KBM-7 (cell line): ENCODE measurements at regions of chr9 and their contacts with region 1.

Region 1: DNA sequence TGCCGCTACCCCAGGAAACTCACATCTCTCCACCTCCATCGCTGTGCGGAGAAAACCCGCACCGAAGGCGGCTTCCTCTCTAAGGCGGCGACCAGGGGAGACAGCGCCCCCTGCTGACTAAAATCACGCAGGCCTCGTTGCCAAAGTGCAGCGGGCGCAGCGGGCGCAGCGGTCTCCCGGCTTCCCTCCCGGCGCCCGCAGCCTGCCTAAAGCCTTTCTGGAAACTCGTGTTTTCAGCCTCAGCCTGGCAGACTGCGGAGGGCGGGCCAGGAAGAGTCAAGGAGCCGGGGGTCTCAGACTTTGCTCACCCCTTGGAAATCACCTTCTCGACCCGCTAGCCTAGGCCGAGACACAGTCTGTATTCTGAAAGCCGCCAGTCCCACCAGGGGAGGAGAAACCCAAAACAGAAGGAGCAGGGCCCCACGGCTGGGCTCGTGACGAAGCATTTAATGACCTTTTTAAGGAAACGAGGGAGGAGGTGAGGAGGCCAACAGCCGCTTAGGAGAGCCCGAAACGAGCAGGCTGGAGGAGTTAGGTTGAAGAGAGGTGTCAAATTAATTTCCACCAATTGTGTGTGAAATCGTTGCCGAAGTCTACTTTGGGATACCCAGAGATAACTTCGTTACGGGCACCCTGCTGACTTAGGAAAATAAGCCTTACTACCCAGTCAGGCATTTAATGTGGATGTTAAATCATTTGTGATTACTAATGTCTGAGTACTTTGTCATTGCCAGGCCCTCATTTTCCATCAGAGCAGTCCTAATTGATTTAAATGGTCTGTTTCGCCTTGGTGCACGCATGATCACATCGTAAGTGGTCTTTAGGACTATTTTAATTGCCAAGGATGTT is 7.3 kb upstream of the FOXB2 start:
- DNase-seq: peak; percentile 85

Region 2: DNA sequence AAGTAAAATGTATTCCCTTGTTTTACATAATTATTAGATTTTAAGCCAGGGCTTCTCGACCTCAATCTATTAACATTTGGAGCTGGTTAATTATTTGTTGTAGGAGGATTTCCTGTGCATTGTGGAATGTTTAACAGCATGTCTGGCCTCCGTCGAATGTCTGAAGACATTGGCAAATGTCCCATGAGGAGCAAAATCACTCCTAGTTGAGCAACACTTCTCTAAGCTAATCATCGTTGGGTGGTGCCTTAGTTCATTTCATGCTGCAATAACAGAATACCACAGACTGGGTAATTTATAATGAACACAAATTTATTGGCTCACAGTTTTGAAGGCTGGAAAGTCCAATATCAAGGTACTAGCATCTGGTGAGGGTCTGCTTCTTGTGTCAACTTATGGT is 151.7 kb after region 1 on chr9:
- in situ Hi-C with region 1: loop called (anchors 25 kb)
- DNase-seq: no peak

Region 3: DNA sequence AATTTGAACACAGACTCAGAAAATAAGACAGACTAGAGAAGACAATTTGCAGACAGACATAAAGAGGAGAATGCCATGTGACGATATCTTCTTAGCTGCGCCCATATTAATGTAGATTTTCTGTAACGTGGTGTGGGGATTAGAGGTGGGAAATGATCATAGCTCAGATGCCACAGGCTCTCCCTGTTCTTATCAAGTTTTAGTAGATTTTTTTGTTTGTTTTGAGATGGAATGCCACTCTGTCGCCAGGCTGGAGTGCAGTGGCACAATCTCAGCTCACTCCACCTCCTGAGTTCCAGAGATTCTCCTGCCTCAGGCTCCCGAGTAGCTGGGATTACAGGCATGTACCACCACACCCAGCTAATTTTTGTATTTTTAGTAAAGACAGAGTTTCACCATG is 224.5 kb after region 1 on chr9:
- in situ Hi-C with region 1: no loop called
- DNase-seq: no peak